HepG2 (cell line): ENCODE measurements at regions of chr15 and their contacts with region 1.

Region 1: GRCh38 chr15:51869070-51869425 is 39.6 kb downstream of the TMOD3 start:
- DNase-seq: peak; percentile 36
- ATAC-seq: no peak
- H3K4me3 ChIP-seq: no peak overlapping the region
- H3K27ac ChIP-seq: no peak overlapping the region
- H3K4me1 ChIP-seq: peaks cover 26% of the 10 kb centered on the region
- H3K27me3 ChIP-seq: no peaks in the 10 kb centered on the region
- CTCF ChIP-seq: no peak
- EP300 ChIP-seq: no peak
- POLR2A ChIP-seq: no peak
- RAD21 ChIP-seq: no peak

Region 2: DNA sequence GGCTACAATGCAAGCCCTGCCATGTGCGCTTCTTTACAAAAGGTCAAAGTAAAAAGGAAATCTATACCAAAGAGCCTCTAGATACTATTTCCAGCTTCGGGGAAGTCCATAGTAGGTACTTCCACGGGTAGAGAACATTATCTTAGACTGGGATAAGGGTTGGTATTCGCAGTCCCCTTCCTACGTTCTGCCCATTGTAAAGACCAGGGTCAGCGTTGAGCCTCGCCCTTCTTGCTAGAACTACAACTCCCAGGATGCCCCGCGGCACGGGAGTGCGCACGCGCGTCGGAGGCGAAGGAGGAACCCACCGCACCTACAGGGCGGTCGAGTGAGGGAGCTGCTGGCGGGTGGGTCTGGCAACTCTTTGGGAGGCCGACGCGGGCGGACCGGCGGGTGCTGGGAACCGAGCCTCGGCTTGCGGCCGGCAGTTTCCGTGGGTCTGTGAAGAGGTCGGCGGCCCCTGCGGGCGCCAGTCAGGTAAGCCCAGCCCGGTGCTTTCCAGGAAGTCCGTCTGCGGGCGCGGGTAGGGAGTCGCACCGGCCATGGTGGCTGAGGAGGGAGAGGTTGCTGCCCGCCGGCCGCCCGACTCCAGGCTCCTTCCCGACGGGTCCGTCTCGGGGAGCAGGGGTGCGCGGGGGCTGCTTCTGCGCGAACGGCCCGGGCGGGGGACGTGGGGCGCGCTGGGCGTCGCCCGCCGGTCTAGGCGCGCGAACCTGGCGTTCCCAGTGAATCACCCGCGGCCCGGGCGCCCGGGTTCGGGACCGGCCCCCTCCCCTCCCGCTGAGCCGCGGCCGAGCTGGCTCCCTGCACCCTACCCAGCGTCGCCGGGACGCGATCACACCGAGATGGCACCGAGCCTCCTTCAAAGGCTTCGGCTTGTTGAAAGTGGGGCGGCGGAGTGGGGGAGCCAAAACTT is 39.4 kb before region 1 on chr15 and contains the start of gene TMOD3:
- CTCF ChIA-PET with region 1: no interaction called
- POLR2A ChIA-PET with region 1: no interaction called
- in situ Hi-C with region 1: no loop called
- intact Hi-C with region 1: loop called (anchors 5 kb)
- DNase-seq: peak; percentile 83
- ATAC-seq: peak; percentile 95
- H3K4me3 ChIP-seq: peak within 1 kb of the TSS; percentile 83 to 92 (median 84)
- H3K27ac ChIP-seq: peak within 1 kb of the TSS; percentile 73
- H3K4me1 ChIP-seq: peaks cover 48% of the 10 kb centered on the region
- H3K27me3 ChIP-seq: no peaks in the 10 kb centered on the region
- CTCF ChIP-seq: peak; percentile 35; the same call in 1 of the 2 replicates
- EP300 ChIP-seq: no peak
- POLR2A ChIP-seq: peak; percentile 79 to 96
- RAD21 ChIP-seq: no peak; the same call in 1 of the 2 replicates
- total RNA-seq, gene TMOD3: 23.2 and 33.7 TPM in 2 replicates

Region 3: DNA sequence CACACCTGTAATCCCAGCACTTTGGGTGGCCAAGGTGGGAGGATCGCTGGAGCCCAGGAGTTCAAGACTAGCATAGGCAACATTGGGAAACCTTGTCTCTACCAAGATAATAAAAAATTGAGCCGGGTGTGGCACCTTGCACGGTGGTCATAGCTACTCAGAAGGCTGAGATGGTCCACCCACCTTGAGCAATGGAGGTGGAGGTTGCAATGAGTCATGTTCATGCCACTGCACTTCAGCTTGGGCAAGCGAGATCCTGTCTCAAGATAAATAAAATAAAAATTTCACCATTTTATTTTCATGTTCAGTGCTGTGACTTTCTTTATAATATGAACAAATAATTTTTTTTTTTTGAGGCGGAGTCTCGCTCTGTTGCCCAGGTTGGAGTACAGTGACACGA is 162.5 kb after region 1 on chr15:
- CTCF ChIA-PET with region 1: no interaction called
- POLR2A ChIA-PET with region 1: no interaction called
- in situ Hi-C with region 1: no loop called
- intact Hi-C with region 1: no loop called
- DNase-seq: no peak
- ATAC-seq: no peak
- H3K4me3 ChIP-seq: no peak overlapping the region
- H3K27ac ChIP-seq: no peak overlapping the region
- H3K4me1 ChIP-seq: peaks cover 52% of the 10 kb centered on the region
- H3K27me3 ChIP-seq: no peaks in the 10 kb centered on the region
- CTCF ChIP-seq: no peak
- EP300 ChIP-seq: no peak
- POLR2A ChIP-seq: no peak
- RAD21 ChIP-seq: no peak